RWPE1 (cell line): ENCODE measurements at regions of chr1 and their contacts with region 1.

Region 1: GRCh38 chr1:210418863-210419650 is 90.4 kb downstream of the HHAT start:
- DNase-seq: no peak
- H3K27ac ChIP-seq: no peak overlapping the region
- CTCF ChIP-seq: no peak

Region 2: GRCh38 chr1:210328746-210329503 is 90.1 kb before region 1 on chr1 and contains the start of gene HHAT:
- CTCF ChIA-PET with region 1: no interaction called
- POLR2A ChIA-PET with region 1: interaction called, 15 read pairs
- DNase-seq: peak; percentile 75
- H3K27ac ChIP-seq: peak within 1 kb of the TSS; percentile 93
- CTCF ChIP-seq: no peak

Region 3: DNA sequence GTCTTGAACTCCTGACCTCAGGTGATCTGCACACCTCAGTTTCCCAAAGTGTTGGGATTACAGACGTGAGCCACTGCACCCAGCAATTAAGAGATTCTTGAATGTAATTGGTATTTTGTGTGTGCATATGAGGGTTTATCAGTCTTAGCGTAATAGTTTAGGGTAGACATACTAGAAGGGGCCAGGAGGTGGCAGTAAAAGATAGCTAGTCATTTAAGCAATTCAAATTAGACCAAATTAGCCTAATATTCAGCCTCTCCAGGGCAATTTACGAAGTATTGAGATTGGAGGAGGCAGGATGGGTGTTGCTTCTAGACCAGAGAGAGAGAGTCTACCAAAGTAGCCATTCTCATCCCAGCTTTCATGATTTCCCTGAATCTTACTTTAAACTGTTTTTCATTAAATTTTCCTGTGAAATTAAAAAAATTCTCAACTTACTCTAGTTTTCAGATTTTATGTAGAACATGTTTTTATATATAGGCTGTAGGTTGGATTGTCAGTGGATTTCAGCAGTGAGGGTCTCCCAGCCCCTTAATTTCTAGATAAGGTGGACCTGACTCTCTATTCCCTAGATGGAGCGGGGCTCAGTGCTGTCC is 29.3 kb after region 1 on chr1:
- CTCF ChIA-PET with region 1: no interaction called
- POLR2A ChIA-PET with region 1: no interaction called
- DNase-seq: peak; percentile 47
- H3K27ac ChIP-seq: no peak overlapping the region
- CTCF ChIP-seq: peak; percentile 61

Region 4: DNA sequence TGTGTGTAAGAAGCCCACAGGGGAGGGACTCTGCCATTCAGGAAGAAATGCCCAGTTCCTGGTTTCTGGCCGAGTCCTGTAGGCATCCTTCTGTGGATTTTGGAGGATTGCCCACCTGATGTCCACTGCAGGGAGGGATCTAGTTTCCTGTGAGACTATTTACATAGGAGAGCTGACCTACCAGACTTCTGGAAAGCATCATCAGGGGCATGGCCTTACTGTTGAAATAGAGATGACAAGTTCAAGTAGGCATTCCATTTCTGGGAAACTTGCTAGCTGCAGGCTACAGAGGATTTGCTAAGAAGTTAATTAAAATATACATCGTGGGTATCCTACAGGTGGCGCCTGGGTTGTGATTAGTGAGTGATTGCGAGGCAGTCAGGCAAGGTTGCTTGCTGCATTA is 58.3 kb after region 1 on chr1:
- CTCF ChIA-PET with region 1: no interaction called
- POLR2A ChIA-PET with region 1: no interaction called
- DNase-seq: no peak
- H3K27ac ChIP-seq: no peak overlapping the region
- CTCF ChIP-seq: no peak